Activated CD8-positive, alpha-beta T cell treated with anti-CD3 and anti-CD28 coated beads, Interleukin-2, amount 10 ng/mL, durations not matched to agents 7 days and 5 days (primary cell): ENCODE measurements at regions of chr3 and their contacts with region 1.

Region 1: GRCh38 chr3:46449755-46450552 is 14.8 kb downstream of the LTF start:
- DNase-seq: no peak
- ATAC-seq: no peak
- H3K4me3 Mint-ChIP-seq: no peak overlapping the region
- H3K27ac Mint-ChIP-seq: no peak overlapping the region
- H3K4me1 Mint-ChIP-seq: no peaks in the 10 kb centered on the region
- H3K27me3 Mint-ChIP-seq: peaks cover 37% of the 10 kb centered on the region

Region 2: GRCh38 chr3:46266598-46266997 is 183.4 kb before region 1 on chr3:
- CTCF ChIA-PET with region 1: no interaction called
- POLR2A ChIA-PET with region 1: no interaction called
- DNase-seq: no peak
- ATAC-seq: no peak
- H3K4me3 Mint-ChIP-seq: no peak overlapping the region
- H3K27ac Mint-ChIP-seq: no peak overlapping the region
- H3K4me1 Mint-ChIP-seq: peaks cover 51% of the 10 kb centered on the region
- H3K27me3 Mint-ChIP-seq: no peaks in the 10 kb centered on the region

Region 3: GRCh38 chr3:46321461-46322104 is 128.4 kb before region 1 on chr3:
- CTCF ChIA-PET with region 1: no interaction called
- POLR2A ChIA-PET with region 1: no interaction called
- DNase-seq: no peak
- ATAC-seq: no peak
- H3K4me3 Mint-ChIP-seq: no peak overlapping the region
- H3K27ac Mint-ChIP-seq: no peak overlapping the region
- H3K4me1 Mint-ChIP-seq: peaks cover 10% of the 10 kb centered on the region
- H3K27me3 Mint-ChIP-seq: peaks cover 20% of the 10 kb centered on the region

Region 4: DNA sequence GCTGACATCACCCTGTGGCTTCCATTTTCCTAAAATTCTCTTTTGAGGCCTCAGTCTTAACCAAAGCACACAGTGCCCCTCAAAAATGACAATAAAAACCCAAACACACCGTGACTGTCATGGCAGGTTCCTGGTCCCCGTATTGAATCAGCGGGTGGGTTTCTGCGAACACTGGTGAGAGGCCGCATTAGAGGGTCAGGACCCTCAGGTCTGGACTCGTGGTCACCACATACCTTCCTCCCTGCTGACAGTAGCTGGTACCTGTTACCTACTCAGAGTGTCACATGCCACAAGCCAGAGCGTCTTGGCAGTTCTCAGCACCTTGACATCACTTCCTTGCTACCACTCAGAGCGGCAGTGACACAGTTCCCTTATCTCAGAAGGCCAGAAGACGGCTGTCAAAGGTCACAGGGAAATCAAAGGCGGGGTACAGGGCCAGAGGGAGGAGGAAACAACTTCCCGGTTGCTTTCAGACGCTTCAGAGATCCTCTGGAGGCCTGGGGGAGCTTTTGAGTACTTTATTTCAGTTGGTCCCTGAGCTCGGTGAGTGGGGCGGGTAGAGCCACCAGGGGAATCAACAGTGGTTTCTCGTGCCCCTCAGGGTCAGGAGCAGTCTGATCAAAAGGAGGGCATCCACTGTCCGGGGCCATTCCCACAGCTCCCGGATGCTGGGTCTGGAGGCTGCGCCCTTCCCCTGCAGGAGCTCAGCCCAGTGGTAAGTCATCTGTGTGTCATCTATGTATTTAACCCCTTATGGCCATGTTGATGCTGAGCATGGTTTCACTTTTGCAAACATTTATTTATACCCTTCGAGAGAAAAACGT is 43.0 kb before region 1 on chr3 and contains the starts of genes CCR5AS and CCRL2:
- CTCF ChIA-PET with region 1: interaction called, 10 read pairs
- POLR2A ChIA-PET with region 1: no interaction called
- DNase-seq: peak; percentile 79
- ATAC-seq: peak; percentile 87
- H3K4me3 Mint-ChIP-seq: peak within 1 kb of the TSS; percentile 87
- H3K27ac Mint-ChIP-seq: peak within 1 kb of the TSS; percentile 93
- H3K4me1 Mint-ChIP-seq: peaks cover 41% of the 10 kb centered on the region
- H3K27me3 Mint-ChIP-seq: peaks cover 10% of the 10 kb centered on the region
- total RNA-seq, gene CCRL2: 10.1 to 11.2 TPM

Region 5: GRCh38 chr3:46477145-46477544 is 27.2 kb after region 1 on chr3:
- CTCF ChIA-PET with region 1: interaction called, 12 read pairs
- POLR2A ChIA-PET with region 1: no interaction called
- DNase-seq: no peak
- ATAC-seq: no peak
- H3K4me3 Mint-ChIP-seq: no peak overlapping the region
- H3K27ac Mint-ChIP-seq: no peak overlapping the region
- H3K4me1 Mint-ChIP-seq: no peaks in the 10 kb centered on the region
- H3K27me3 Mint-ChIP-seq: peaks cover 57% of the 10 kb centered on the region

Region 6: GRCh38 chr3:46508850-46509591 is 59.1 kb after region 1 on chr3:
- CTCF ChIA-PET with region 1: no interaction called
- POLR2A ChIA-PET with region 1: no interaction called
- DNase-seq: no peak
- ATAC-seq: no peak
- H3K4me3 Mint-ChIP-seq: no peak overlapping the region
- H3K27ac Mint-ChIP-seq: no peak overlapping the region
- H3K4me1 Mint-ChIP-seq: peaks cover 8% of the 10 kb centered on the region
- H3K27me3 Mint-ChIP-seq: peaks cover 22% of the 10 kb centered on the region